IMR-90 (cell line): ENCODE measurements at regions of chr1 and their contacts with region 1.

Region 1: DNA sequence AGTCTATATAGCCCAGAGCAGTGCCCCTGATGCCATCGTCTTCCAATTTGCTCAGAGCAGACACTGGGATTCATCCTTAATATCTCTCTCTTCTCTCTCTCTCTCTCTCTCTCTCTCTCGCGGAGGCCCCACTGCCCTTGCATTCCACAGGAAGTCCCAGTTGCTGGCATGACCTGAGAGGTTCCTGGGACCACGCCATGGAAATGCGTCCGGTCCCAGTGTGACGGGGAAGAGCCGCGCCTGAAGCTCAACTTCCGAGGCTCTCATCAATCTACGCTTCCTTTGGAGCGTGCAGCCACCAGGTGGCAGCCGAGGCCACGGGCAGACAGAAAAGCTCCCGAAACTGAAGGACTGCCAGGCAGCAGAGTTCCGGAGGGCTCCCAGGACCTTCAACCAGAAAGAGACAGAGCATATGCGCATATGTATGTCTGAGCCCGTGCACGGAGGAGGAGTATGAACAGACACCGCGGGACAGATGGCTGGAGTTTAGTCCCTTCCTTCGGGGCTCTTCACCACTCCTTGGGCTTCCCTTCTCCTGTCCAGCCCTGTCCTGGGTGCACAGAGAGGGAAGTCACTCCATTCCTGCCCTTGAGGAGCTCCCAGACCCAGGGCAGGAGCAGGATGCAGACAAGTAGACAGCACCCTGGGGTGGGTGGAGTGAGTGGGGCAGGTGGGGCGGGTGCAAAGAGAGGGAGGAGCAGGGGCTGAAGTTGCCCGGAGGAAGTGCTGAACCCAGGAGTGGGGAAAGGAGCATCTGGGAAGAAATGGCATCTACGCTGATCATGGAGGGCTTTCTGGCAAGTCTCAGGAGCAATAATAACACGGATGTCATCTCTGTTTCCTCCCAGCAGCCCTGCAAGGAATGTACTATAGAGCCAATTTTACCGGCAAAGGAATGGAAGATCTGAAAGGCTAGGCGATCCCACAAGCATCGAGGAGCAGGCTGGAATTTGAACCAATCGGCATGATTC is 10.5 kb downstream of the PDZK1IP1 start:
- DNase-seq: peak; percentile 91
- ATAC-seq: peak; percentile 91
- H3K4me3 ChIP-seq: peak overlapping the region; percentile 27
- H3K27ac ChIP-seq: no peak overlapping the region
- H3K4me1 ChIP-seq: no peaks in the 10 kb centered on the region
- H3K27me3 ChIP-seq: no peaks in the 10 kb centered on the region; the same call in 1 of the 2 replicates
- CTCF ChIP-seq: peak; percentile 98
- POLR2A ChIP-seq: no peak
- RAD21 ChIP-seq: peak; percentile 93

Region 2: GRCh38 chr1:46527474-46528296 is 651.6 kb before region 1 on chr1:
- CTCF ChIA-PET with region 1: no interaction called
- POLR2A ChIA-PET with region 1: no interaction called
- dilution Hi-C with region 1: no loop called
- in situ Hi-C with region 1: no loop called
- intact Hi-C with region 1: loop called (anchors 10 kb)
- DNase-seq: peak; percentile 66
- ATAC-seq: peak; percentile 90
- H3K4me3 ChIP-seq: no peak overlapping the region
- H3K27ac ChIP-seq: no peak overlapping the region
- H3K4me1 ChIP-seq: peaks cover 3% of the 10 kb centered on the region; the same call in 1 of the 2 replicates
- H3K27me3 ChIP-seq: peaks cover 57% of the 10 kb centered on the region
- CTCF ChIP-seq: peak; percentile 98
- POLR2A ChIP-seq: peak; percentile 55; the same call in 1 of the 2 replicates
- RAD21 ChIP-seq: peak; percentile 99

Region 3: DNA sequence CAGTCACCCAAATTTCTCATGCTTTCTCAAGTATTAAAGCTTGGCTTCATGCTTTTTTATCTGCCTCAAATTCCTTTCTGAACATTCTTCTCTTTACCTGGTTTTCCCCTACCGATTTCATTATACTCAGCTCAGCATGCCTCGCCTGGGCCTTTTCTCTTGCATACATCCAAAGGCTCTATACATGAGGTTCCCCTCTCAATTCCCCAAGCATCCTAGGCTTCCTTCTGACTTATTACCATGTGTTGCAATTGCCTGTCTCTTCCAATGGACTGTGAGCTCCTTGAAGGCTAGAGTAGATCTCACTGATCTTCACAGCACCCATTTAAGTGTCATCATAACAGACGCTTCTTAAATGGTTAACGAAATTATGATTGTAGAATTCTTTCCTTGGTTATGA is 66.1 kb before region 1 on chr1:
- CTCF ChIA-PET with region 1: no interaction called
- POLR2A ChIA-PET with region 1: no interaction called
- dilution Hi-C with region 1: no loop called
- in situ Hi-C with region 1: no loop called
- intact Hi-C with region 1: no loop called
- DNase-seq: no peak
- ATAC-seq: no peak
- H3K4me3 ChIP-seq: no peak overlapping the region
- H3K27ac ChIP-seq: no peak overlapping the region
- H3K4me1 ChIP-seq: no peaks in the 10 kb centered on the region
- H3K27me3 ChIP-seq: no peaks in the 10 kb centered on the region
- CTCF ChIP-seq: no peak
- POLR2A ChIP-seq: no peak
- RAD21 ChIP-seq: no peak

Region 4: DNA sequence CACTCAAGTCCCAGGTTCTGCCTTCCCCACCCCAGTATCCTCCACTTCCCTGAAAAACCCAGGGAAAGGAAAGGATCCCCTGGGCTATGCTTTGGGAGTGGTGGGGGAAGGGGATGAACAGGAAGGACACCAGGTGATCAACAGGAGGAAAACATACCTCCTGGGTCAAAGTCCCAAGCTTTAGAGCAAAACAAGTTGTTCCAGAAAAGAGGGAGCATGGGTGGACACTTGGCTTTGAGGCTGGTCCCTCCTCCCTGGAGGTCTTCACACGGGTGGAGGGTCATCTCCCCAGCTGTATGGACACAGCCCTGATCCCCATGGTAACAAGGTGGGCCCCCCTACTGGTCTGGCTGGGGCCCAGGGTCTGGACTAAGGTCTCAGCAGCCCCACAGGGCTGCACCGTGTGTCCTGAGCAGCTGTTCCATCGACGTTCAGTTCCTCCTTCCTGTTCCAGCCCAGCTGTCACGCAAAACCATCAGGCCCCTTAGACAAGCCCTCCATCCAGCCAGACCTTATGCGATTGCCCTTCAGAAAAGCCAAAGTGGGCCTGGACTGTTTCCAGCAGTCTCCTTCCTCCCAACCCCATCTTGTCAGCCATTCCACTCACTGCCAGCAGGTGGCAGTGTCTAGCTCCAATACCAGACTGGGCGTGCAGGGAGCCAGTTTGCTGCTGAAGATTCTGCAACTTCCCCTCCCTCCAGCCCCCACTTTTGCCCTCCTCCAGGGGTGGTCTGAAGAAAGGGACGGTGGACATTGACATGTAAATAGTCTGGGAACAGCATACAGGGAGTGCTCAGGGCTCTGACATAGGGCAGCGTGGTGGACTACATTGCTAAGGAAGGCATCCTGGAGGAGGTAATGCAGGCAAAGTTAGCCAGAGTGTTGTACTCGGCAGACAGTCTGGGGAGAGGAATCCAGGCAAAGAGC is 13.4 kb after region 1 on chr1:
- CTCF ChIA-PET with region 1: interaction called, 11 read pairs
- POLR2A ChIA-PET with region 1: no interaction called
- dilution Hi-C with region 1: no loop called
- in situ Hi-C with region 1: no loop called
- intact Hi-C with region 1: no loop called
- DNase-seq: peak; percentile 53
- ATAC-seq: peak; percentile 79
- H3K4me3 ChIP-seq: no peak overlapping the region
- H3K27ac ChIP-seq: no peak overlapping the region
- H3K4me1 ChIP-seq: peaks cover 2% of the 10 kb centered on the region; the same call in 1 of the 2 replicates
- H3K27me3 ChIP-seq: peaks cover 6% of the 10 kb centered on the region
- CTCF ChIP-seq: peak; percentile 91
- POLR2A ChIP-seq: no peak
- RAD21 ChIP-seq: peak; percentile 78

Region 5: DNA sequence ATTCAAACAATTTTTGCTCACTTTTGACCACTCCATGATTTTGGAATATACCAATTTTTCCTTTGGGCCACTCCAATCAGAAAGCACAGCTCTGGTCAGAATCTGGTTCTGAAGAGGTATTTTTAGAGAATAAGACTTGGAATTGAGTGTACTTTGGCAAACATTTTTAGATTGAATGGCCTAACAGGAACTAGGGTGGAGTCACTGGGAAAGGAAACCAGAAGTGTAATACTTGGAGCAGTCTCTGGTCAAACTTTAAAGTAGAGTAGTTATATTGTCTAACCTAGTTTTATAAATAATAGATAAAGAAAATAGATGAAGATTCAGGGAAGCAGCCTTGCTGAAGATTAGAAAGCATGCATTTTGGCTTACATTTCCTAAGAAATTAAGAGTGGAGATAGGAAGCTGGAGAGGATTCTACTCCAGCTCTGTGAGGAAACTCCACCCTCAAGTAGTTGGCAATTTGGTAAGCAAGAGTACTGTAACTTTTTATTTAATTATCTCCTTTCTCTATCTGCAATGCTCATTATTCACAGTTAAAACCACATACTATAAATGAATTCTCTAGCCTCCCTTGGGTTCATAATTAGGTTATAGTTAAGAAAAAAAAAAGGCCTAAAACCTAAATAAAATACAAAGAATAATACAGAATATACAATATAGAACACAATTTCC is 118.9 kb after region 1 on chr1:
- CTCF ChIA-PET with region 1: no interaction called
- POLR2A ChIA-PET with region 1: no interaction called
- dilution Hi-C with region 1: no loop called
- in situ Hi-C with region 1: no loop called
- intact Hi-C with region 1: no loop called
- DNase-seq: no peak
- ATAC-seq: no peak
- H3K4me3 ChIP-seq: no peak overlapping the region
- H3K27ac ChIP-seq: no peak overlapping the region
- H3K4me1 ChIP-seq: peaks cover 5% of the 10 kb centered on the region; the same call in 1 of the 2 replicates
- H3K27me3 ChIP-seq: no peaks in the 10 kb centered on the region
- CTCF ChIP-seq: no peak
- POLR2A ChIP-seq: no peak
- RAD21 ChIP-seq: no peak

Region 6: DNA sequence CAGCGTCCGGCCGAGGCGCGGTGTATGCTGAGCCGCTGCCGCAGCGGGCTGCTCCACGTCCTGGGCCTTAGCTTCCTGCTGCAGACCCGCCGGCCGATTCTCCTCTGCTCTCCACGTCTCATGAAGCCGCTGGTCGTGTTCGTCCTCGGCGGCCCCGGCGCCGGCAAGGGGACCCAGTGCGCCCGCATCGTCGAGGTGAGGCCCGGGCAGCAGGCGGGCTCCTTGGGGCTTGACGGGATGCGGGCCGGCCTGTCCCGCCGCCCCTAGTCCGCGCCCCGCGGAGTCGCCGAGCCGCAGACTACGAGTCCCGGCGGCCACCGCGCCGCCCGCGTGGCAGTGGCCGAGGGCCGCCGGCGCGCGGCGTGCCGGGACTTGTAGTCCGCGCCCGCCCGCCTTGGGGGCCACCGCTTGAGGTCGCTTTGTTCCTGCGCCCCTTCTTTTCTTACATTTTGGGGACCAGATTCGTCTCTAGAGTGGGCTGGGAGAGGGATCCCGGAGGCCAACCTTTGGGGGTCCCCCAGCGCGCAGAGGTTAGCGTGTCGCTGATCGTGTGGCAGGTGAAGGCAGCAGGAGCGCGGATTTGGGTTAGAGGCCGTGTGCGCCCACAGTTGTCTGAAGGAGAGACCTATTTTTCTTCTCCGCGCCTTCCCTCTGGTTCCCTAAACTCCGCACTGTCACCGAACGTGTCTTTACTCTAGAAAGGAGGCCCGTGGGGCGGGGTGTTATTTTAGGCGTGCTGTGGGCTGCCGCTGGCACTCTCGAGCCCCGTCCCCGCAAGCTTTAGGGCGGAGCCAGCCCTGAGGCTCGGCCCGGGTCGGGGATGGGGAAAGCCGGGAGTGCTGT is 154.8 kb after region 1 on chr1:
- CTCF ChIA-PET with region 1: interaction called, 3 read pairs
- POLR2A ChIA-PET with region 1: no interaction called
- dilution Hi-C with region 1: no loop called
- in situ Hi-C with region 1: no loop called
- intact Hi-C with region 1: loop called (anchors 5 kb)
- DNase-seq: peak; percentile 74
- ATAC-seq: peak; percentile 92
- H3K4me3 ChIP-seq: peak overlapping the region; percentile 86
- H3K27ac ChIP-seq: peak overlapping the region; percentile 88
- H3K4me1 ChIP-seq: peaks cover 6% of the 10 kb centered on the region
- H3K27me3 ChIP-seq: no peaks in the 10 kb centered on the region
- CTCF ChIP-seq: peak; percentile 7; the same call in 1 of the 2 replicates
- POLR2A ChIP-seq: peak; percentile 59
- RAD21 ChIP-seq: no peak

Region 7: GRCh38 chr1:47424336-47424982 is 245.2 kb after region 1 on chr1:
- CTCF ChIA-PET with region 1: interaction called, 4 read pairs
- POLR2A ChIA-PET with region 1: no interaction called
- dilution Hi-C with region 1: no loop called
- in situ Hi-C with region 1: loop called (anchors 5 kb)
- intact Hi-C with region 1: loop called (anchors 1 kb)
- DNase-seq: peak; percentile 67
- ATAC-seq: peak; percentile 75
- H3K4me3 ChIP-seq: no peak overlapping the region
- H3K27ac ChIP-seq: no peak overlapping the region
- H3K4me1 ChIP-seq: no peaks in the 10 kb centered on the region
- H3K27me3 ChIP-seq: peaks cover 5% of the 10 kb centered on the region; the same call in 1 of the 2 replicates
- CTCF ChIP-seq: peak; percentile 89
- POLR2A ChIP-seq: no peak
- RAD21 ChIP-seq: peak; percentile 74

Region 8: GRCh38 chr1:47710329-47711071 is 531.2 kb after region 1 on chr1:
- CTCF ChIA-PET with region 1: interaction called, 5 read pairs
- POLR2A ChIA-PET with region 1: no interaction called
- dilution Hi-C with region 1: no loop called
- in situ Hi-C with region 1: loop called (anchors 10 kb)
- intact Hi-C with region 1: loop called (anchors 1 kb)
- DNase-seq: peak; percentile 37
- ATAC-seq: peak; percentile 93
- H3K4me3 ChIP-seq: no peak overlapping the region
- H3K27ac ChIP-seq: no peak overlapping the region
- H3K4me1 ChIP-seq: no peaks in the 10 kb centered on the region; the same call in 1 of the 2 replicates
- H3K27me3 ChIP-seq: peaks cover 61% of the 10 kb centered on the region
- CTCF ChIP-seq: peak; percentile 95
- POLR2A ChIP-seq: 0 out of 2 replicates have a peak, but pooled peaks have one; percentile 32
- RAD21 ChIP-seq: peak; percentile 95

Region 9: GRCh38 chr1:48498096-48498791 is 1318.9 kb after region 1 on chr1:
- CTCF ChIA-PET with region 1: no interaction called
- POLR2A ChIA-PET with region 1: no interaction called
- dilution Hi-C with region 1: no loop called
- in situ Hi-C with region 1: no loop called
- intact Hi-C with region 1: loop called (anchors 10 kb)
- DNase-seq: peak; percentile 70
- ATAC-seq: peak; percentile 75
- H3K4me3 ChIP-seq: no peak overlapping the region
- H3K27ac ChIP-seq: no peak overlapping the region
- H3K4me1 ChIP-seq: peaks cover 13% of the 10 kb centered on the region
- H3K27me3 ChIP-seq: no peaks in the 10 kb centered on the region
- CTCF ChIP-seq: peak; percentile 93
- POLR2A ChIP-seq: no peak
- RAD21 ChIP-seq: peak; percentile 73